Esophagus muscularis mucosa (tissue), 4 donors: ENCODE measurements at regions of chr6 and their contacts with region 1.

Region 1: GRCh38 chr6:8219352-8219943 is 117.1 kb upstream of the EEF1E1 start:
- DNase-seq: no peak
- H3K4me3 ChIP-seq: no peak overlapping the region
- H3K27ac ChIP-seq: no peak overlapping the region
- H3K4me1 ChIP-seq: no peaks in the 10 kb centered on the region
- H3K27me3 ChIP-seq: no peaks in the 10 kb centered on the region
- CTCF ChIP-seq: peak; percentile 48 to 75 (median 70)
- EP300 ChIP-seq: no peak
- POLR2A ChIP-seq: no peak

Region 2: GRCh38 chr6:8113131-8113654 is 106.3 kb before region 1 on chr6:
- intact Hi-C with region 1: no loop called
- DNase-seq: no peak
- H3K4me3 ChIP-seq: no peak overlapping the region
- H3K27ac ChIP-seq: no peak overlapping the region
- H3K4me1 ChIP-seq: no peaks in the 10 kb centered on the region
- H3K27me3 ChIP-seq: peaks cover 0 to 18% (median 0%) of the 10 kb centered on the region in 4 donors
- CTCF ChIP-seq: no peak
- EP300 ChIP-seq: no peak
- POLR2A ChIP-seq: no peak

Region 3: GRCh38 chr6:8131256-8131897 is 88.1 kb before region 1 on chr6:
- intact Hi-C with region 1: loop called (anchors 5 kb)
- DNase-seq: no peak
- H3K4me3 ChIP-seq: no peak overlapping the region
- H3K27ac ChIP-seq: no peak overlapping the region
- H3K4me1 ChIP-seq: no peaks in the 10 kb centered on the region
- H3K27me3 ChIP-seq: peaks cover 0 to 23% (median 0%) of the 10 kb centered on the region in 4 donors
- CTCF ChIP-seq: peak in 1 of 3 experiments; percentile 12
- EP300 ChIP-seq: no peak
- POLR2A ChIP-seq: no peak